PC-3 (cell line): ENCODE measurements at regions of chr3 and their contacts with region 1.

Region 1: DNA sequence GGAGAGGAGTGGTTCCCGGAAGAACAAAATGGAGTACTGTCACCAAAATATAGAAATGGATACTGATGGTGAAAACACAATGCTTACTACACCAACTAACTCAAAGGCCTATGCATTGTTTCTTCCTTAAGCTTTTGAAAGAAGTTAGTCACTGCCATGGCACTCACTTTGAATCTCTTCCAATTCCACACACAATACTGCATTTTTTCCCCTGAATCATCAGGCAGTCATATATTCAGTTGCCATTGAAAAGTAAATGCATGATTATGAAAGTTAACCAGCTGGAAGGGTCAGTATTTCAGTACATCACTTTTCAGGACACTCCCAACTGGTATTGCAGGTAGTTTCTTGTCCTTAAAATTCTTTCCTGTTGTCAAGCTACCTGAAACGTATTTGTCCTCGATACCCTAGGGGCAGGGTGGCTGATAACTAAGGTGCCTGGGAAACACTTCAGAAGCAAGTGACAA is 9.0 kb upstream of the LRRFIP2 start:
- DNase-seq: peak; percentile 99
- ATAC-seq: peak; percentile 85
- H3K4me3 ChIP-seq: peak overlapping the region; percentile 42; the same call in 1 of the 2 replicates
- H3K27ac ChIP-seq: peak overlapping the region; percentile 88
- H3K4me1 ChIP-seq: peaks cover 49% of the 10 kb centered on the region
- H3K27me3 ChIP-seq: no peaks in the 10 kb centered on the region
- CTCF ChIP-seq: no peak

Region 2: DNA sequence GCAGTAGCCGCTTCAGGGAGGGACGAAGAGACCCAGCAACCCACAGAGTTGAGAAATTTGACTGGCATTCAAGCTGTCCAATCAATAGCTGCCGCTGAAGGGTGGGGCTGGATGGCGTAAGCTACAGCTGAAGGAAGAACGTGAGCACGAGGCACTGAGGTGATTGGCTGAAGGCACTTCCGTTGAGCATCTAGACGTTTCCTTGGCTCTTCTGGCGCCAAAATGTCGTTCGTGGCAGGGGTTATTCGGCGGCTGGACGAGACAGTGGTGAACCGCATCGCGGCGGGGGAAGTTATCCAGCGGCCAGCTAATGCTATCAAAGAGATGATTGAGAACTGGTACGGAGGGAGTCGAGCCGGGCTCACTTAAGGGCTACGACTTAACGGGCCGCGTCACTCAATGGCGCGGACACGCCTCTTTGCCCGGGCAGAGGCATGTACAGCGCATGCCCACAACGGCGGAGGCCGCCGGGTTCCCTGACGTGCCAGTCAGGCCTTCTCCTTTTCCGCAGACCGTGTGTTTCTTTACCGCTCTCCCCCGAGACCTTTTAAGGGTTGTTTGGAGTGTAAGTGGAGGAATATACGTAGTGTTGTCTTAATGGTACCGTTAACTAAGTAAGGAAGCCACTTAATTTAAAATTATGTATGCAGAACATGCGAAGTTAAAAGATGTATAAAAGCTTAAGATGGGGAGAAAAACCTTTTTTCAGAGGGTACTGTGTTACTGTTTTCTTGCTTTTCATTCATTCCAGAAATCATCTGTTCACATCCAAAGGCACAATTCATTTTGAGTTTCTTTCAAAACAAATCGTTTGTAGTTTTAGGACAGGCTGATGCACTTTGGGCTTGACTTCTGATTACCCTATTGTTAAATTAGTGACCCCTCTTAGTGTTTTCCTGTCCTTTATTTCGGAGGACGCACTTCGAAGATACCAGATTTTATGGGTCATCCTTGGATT is 189.8 kb before region 1 on chr3 and contains the start of gene MLH1:
- CTCF ChIA-PET with region 1: no interaction called
- POLR2A ChIA-PET with region 1: no interaction called
- intact Hi-C with region 1: loop called (anchors 2 kb)
- DNase-seq: peak; percentile 100
- ATAC-seq: peak; percentile 85
- H3K4me3 ChIP-seq: peak within 1 kb of the TSS; percentile 83
- H3K27ac ChIP-seq: peak within 1 kb of the TSS; percentile 82
- H3K4me1 ChIP-seq: peaks cover 33% of the 10 kb centered on the region
- H3K27me3 ChIP-seq: no peaks in the 10 kb centered on the region
- CTCF ChIP-seq: no peak
- total RNA-seq, gene MLH1: 55.8 and 79.7 TPM in 2 replicates

Region 3: DNA sequence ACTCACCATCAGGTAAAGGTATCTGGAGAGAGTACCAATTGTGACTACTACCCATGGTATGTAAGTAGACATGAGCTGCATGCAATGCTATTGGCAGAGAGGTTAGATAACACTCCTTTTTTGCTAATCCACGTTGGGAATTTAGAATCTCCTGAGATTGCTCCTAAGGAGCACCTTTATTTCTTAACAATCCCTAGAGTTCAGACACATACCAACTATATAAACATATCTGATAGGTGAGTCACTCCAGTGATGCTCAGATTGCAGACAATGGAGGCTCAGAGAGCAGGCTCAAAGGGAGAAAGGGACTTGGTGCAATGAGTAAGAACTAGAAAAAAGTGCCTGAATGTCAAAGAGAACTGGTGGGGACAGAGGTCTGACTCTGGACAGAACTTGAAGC is 38.0 kb after region 1 on chr3:
- CTCF ChIA-PET with region 1: no interaction called
- POLR2A ChIA-PET with region 1: no interaction called
- intact Hi-C with region 1: loop called (anchors 2 kb)
- DNase-seq: peak; percentile 98
- ATAC-seq: peak; percentile 97
- H3K4me3 ChIP-seq: no peak overlapping the region
- H3K27ac ChIP-seq: peak overlapping the region; percentile 38
- H3K4me1 ChIP-seq: peaks cover 30% of the 10 kb centered on the region
- H3K27me3 ChIP-seq: no peaks in the 10 kb centered on the region
- CTCF ChIP-seq: no peak

Region 4: GRCh38 chr3:37243820-37244748 is 60.7 kb after region 1 on chr3:
- CTCF ChIA-PET with region 1: no interaction called
- POLR2A ChIA-PET with region 1: no interaction called
- intact Hi-C with region 1: loop called (anchors 2 kb)
- DNase-seq: peak; percentile 95
- ATAC-seq: peak; percentile 67
- H3K4me3 ChIP-seq: peak overlapping the region; percentile 87
- H3K27ac ChIP-seq: peak overlapping the region; percentile 81
- H3K4me1 ChIP-seq: peaks cover 43% of the 10 kb centered on the region
- H3K27me3 ChIP-seq: no peaks in the 10 kb centered on the region
- CTCF ChIP-seq: no peak

Region 5: DNA sequence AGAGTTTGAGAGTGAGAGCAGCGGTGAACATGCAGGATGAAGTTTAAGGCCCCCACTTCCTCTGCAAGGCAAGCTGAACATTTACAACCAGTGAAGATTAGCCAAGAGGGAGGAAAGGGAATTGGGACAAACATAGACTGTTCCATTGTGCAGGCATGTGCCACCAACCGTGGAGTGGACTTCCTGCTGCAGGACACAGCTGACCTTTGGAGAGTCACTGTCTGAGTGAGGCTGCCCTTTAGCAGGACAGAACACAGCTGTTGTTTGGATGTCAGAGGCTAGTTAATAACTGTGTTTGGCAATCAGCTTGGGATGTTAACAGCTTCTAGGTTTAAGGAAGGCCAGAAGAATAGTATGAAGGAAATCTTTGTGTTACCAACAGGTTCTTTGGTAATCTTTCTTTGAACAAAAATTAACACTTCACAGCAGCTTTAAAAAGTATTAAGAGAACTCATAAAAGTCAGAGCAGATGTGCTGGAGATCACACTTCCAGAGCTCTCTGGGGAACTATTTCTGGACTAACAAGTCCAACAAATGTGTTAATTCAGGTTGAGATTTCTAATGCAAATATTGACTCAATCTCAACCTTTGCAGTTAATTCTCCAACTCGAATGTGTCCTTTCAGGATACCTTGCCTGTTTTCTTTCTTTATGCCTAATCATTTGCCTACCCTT is 709.7 kb after region 1 on chr3:
- CTCF ChIA-PET with region 1: no interaction called
- POLR2A ChIA-PET with region 1: no interaction called
- intact Hi-C with region 1: no loop called
- DNase-seq: no peak
- ATAC-seq: no peak
- H3K4me3 ChIP-seq: no peak overlapping the region
- H3K27ac ChIP-seq: no peak overlapping the region
- H3K4me1 ChIP-seq: peaks cover 4% of the 10 kb centered on the region; the same call in 1 of the 2 replicates
- H3K27me3 ChIP-seq: peaks cover 22% of the 10 kb centered on the region; the same call in 1 of the 2 replicates
- CTCF ChIP-seq: no peak